Left ventricle myocardium inferior (tissue), 1 donor: ENCODE measurements at regions of chr2 and their contacts with region 1.

Region 1: DNA sequence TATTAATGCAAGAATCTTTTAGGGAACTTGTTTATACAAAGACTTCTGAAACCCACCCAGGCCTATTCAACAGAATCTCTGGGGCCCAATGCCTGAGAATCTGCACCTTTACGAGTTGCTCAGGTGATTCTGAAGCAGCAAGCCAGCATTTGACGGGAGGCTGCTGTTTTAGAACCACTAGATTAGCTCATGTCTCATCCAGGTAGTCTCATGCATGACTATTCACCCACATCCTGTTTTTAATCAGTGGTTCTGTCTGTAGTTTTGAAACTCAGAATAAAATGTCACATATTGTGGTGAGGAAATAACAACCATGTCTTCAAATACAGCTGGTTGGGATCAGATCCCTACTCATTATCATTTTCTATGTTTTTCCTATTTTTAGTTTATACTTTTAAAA is 39.5 kb downstream of the CYTIP start:
- DNase-seq: no peak
- H3K4me3 ChIP-seq: no peak overlapping the region
- H3K27ac ChIP-seq: no peak overlapping the region
- H3K4me1 ChIP-seq: no peaks in the 10 kb centered on the region
- H3K27me3 ChIP-seq: no peaks in the 10 kb centered on the region
- CTCF ChIP-seq: no peak

Region 2: GRCh38 chr2:157363612-157364101 is 40.7 kb before region 1 on chr2:
- intact Hi-C with region 1: loop called (anchors 2 kb)
- DNase-seq: no peak
- H3K4me3 ChIP-seq: no peak overlapping the region
- H3K27ac ChIP-seq: no peak overlapping the region
- H3K4me1 ChIP-seq: peaks cover 10% of the 10 kb centered on the region
- H3K27me3 ChIP-seq: no peaks in the 10 kb centered on the region
- CTCF ChIP-seq: no peak

Region 3: GRCh38 chr2:157722580-157723234 is 318.3 kb after region 1 on chr2:
- intact Hi-C with region 1: no loop called
- DNase-seq: no peak
- H3K4me3 ChIP-seq: no peak overlapping the region
- H3K27ac ChIP-seq: no peak overlapping the region
- H3K4me1 ChIP-seq: no peaks in the 10 kb centered on the region
- H3K27me3 ChIP-seq: no peaks in the 10 kb centered on the region
- CTCF ChIP-seq: no peak